ENCODE measurements at regions of chr11 and their contacts with region 1.

Region 1: GRCh38 chr11:1807264-1807995 is 27.4 kb upstream of the SYT8 start:
- DNase-seq: peak; percentile 32 to 59
- ATAC-seq: peak; percentile 81 to 92; a peak in 5 of 6 replicates
- H3K4me3 ChIP-seq: no peak overlapping the region
- H3K27ac ChIP-seq: no peak overlapping the region
- H3K4me1 ChIP-seq: no peaks in the 10 kb centered on the region
- CTCF ChIP-seq: peak; percentile 14; the same call in 1 of the 3 replicates
- EP300 ChIP-seq: no peak
- POLR2A ChIP-seq: no peak
- RAD21 ChIP-seq: peak; percentile 25 to 44; a peak in 3 of 5 replicates

Region 2: DNA sequence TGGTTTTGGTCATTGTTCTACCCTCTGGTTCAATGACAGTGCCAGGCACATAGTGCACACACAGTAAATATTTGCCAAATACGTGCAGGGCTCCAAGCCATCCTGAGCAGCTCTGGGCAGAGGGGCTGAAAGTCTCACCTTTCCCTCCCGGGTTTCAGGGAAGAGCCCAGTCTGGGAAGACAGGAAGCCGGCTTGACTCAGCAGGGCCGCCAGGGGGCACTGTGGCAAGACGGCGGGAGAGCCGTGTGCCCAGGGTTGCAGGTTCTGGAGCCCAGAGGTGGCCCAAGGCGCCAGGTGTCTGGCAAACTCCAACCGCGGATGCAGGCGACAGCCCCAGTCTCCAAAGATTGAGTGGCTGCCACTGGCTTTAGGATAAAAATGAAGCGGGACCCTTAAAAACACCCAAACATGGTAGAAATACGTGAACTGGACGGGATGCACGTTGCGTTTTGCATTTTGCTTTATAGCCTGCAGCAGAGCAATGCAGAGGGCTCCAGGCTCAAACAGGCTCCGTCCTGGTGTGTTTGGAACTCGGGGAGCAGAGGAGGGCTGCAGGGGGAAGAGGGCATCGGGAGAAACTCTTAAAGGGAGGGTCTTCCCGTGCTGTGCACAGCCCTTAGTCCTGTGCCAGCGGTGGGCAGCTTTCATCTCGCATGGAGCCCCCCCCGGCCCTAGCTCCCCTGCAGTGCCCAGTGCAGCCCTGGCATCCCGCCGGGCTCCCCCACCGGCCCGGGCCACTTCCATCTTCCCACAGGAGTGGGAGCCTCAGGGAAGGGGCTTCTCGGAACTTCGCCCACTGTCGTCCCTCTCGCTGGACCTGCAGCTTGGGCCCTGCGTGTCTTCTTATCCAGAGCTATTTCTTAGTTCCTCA is 167.1 kb before region 1 on chr11:
- CTCF ChIA-PET with region 1: no interaction called
- POLR2A ChIA-PET with region 1: no interaction called
- DNase-seq: peak; percentile 50 to 74
- ATAC-seq: peak; percentile 71 to 95
- H3K4me3 ChIP-seq: no peak overlapping the region
- H3K27ac ChIP-seq: no peak overlapping the region
- H3K4me1 ChIP-seq: no peaks in the 10 kb centered on the region
- CTCF ChIP-seq: peak; percentile 73
- EP300 ChIP-seq: no peak
- POLR2A ChIP-seq: no peak
- RAD21 ChIP-seq: peak; percentile 18; a peak in 1 of 5 replicates

Region 3: GRCh38 chr11:1706634-1707400 is 100.6 kb before region 1 on chr11:
- CTCF ChIA-PET with region 1: interaction called, 25 read pairs
- POLR2A ChIA-PET with region 1: no interaction called
- DNase-seq: peak; percentile 38 to 67
- ATAC-seq: peak; percentile 77 to 97
- H3K4me3 ChIP-seq: no peak overlapping the region
- H3K27ac ChIP-seq: no peak overlapping the region
- H3K4me1 ChIP-seq: peaks cover 3% of the 10 kb centered on the region; the same call in 1 of the 3 replicates
- CTCF ChIP-seq: peak; percentile 51
- EP300 ChIP-seq: no peak
- POLR2A ChIP-seq: no peak
- RAD21 ChIP-seq: peak; percentile 74 to 82

Region 4: GRCh38 chr11:1820463-1821325 is 13.3 kb after region 1 on chr11:
- CTCF ChIA-PET with region 1: interaction called, 58 read pairs
- POLR2A ChIA-PET with region 1: no interaction called
- DNase-seq: no peak
- ATAC-seq: no peak
- H3K4me3 ChIP-seq: no peak overlapping the region
- H3K27ac ChIP-seq: no peak overlapping the region
- H3K4me1 ChIP-seq: peaks cover 5% of the 10 kb centered on the region
- CTCF ChIP-seq: no peak
- EP300 ChIP-seq: no peak
- POLR2A ChIP-seq: no peak
- RAD21 ChIP-seq: no peak

Region 5: GRCh38 chr11:1869427-1870325 is 62.2 kb after region 1 on chr11:
- CTCF ChIA-PET with region 1: no interaction called
- POLR2A ChIA-PET with region 1: no interaction called
- DNase-seq: peak; percentile 59 to 79
- ATAC-seq: peak; percentile 73 to 89
- H3K4me3 ChIP-seq: 0 out of 3 replicates have a peak overlapping the region, but pooled peaks have one; percentile 8
- H3K27ac ChIP-seq: peak overlapping the region in 1 of 2 experiments; percentile 34; a peak in 2 of 6 replicates
- H3K4me1 ChIP-seq: peaks cover 29% of the 10 kb centered on the region
- CTCF ChIP-seq: peak; percentile 51
- EP300 ChIP-seq: no peak
- POLR2A ChIP-seq: no peak
- RAD21 ChIP-seq: peak in 1 of 2 experiments; percentile 15; a peak in 1 of 5 replicates